ENCODE measurements at regions of chr1 and their contacts with region 1.

Region 1: DNA sequence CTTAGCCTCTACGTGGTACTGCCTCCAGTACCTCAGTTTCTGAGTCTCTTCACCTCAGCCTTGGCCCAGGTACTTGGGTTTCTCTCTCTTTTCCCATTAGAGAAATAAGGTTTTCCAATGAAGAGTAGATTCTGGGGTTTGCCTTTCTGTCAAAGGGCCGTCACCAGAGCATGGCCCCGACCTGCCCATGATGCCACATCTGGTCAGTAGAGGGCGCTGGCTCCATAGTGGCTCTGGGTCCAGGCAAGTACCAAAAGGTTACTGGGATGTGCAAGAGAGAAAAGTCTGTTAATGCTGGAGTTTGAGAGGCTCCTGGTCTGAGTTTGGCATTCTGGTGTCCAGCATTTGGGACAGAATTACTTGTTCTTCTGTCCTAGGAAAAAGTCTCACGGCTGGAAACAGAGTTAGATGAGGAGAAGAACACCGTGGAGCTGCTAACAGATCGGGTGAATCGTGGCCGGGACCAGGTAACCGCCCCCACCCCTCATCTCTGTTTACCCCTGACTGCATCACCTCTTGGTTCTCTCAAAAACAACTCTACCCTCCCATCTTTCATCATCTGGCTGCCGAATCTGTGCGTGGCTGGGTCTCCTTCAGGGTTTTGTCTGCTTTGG is 5.3 kb upstream of the TUFT1 start:
- DNase-seq: peak; percentile 62
- H3K4me3 ChIP-seq: no peak overlapping the region
- H3K27ac ChIP-seq: no peak overlapping the region
- H3K4me1 ChIP-seq: peaks cover 3% of the 10 kb centered on the region
- H3K27me3 ChIP-seq: no peaks in the 10 kb centered on the region
- CTCF ChIP-seq: peak; percentile 92 to 95
- POLR2A ChIP-seq: no peak

Region 2: GRCh38 chr1:151036363-151036762 is 498.4 kb before region 1 on chr1 and contains the start of gene BNIPL:
- CTCF ChIA-PET with region 1: no interaction called
- POLR2A ChIA-PET with region 1: no interaction called
- dilution Hi-C with region 1: no loop called
- intact Hi-C with region 1: no loop called
- DNase-seq: no peak
- H3K4me3 ChIP-seq: no peak within 1 kb of the TSS
- H3K27ac ChIP-seq: no peak within 1 kb of the TSS
- H3K4me1 ChIP-seq: no peaks in the 10 kb centered on the region
- H3K27me3 ChIP-seq: no peaks in the 10 kb centered on the region
- CTCF ChIP-seq: no peak
- POLR2A ChIP-seq: no peak
- total RNA-seq, gene BNIPL: 0.42 and 0.67 TPM in 2 replicates

Region 3: DNA sequence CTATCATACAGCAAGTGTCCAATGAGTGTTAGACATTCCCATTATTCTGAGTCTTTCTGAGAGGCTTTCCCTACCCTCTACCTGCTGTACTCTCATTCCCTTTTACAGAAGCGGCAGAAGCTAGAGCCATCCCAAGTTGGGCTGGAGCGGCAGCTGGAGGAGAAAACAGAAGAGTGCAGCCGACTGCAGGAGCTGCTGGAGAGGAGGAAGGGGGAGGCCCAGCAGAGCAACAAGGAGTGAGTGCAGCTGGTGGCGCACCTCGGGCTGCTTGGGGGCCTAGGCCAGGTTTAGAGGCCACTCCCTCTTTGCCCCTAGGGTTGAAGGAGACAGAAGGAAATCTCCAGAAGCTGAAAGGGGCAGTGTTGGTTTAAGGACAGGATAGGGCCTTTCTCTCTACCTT is 11.4 kb before region 1 on chr1:
- CTCF ChIA-PET with region 1: interaction called, 10 read pairs
- POLR2A ChIA-PET with region 1: no interaction called
- dilution Hi-C with region 1: no loop called
- intact Hi-C with region 1: no loop called
- DNase-seq: no peak
- H3K4me3 ChIP-seq: no peak overlapping the region
- H3K27ac ChIP-seq: no peak overlapping the region
- H3K4me1 ChIP-seq: no peaks in the 10 kb centered on the region
- H3K27me3 ChIP-seq: no peaks in the 10 kb centered on the region
- CTCF ChIP-seq: no peak
- POLR2A ChIP-seq: no peak

Region 4: GRCh38 chr1:151728151-151729054 is 193.6 kb after region 1 on chr1:
- CTCF ChIA-PET with region 1: interaction called, 20 read pairs
- POLR2A ChIA-PET with region 1: no interaction called
- dilution Hi-C with region 1: no loop called
- intact Hi-C with region 1: no loop called
- DNase-seq: no peak
- H3K4me3 ChIP-seq: no peak overlapping the region
- H3K27ac ChIP-seq: no peak overlapping the region
- H3K4me1 ChIP-seq: no peaks in the 10 kb centered on the region
- H3K27me3 ChIP-seq: peaks cover 26 to 28% of the 10 kb centered on the region in 2 experiments
- CTCF ChIP-seq: no peak
- POLR2A ChIP-seq: no peak

Region 5: GRCh38 chr1:151739590-151740375 is 205.0 kb after region 1 on chr1:
- CTCF ChIA-PET with region 1: interaction called, 20 read pairs
- POLR2A ChIA-PET with region 1: no interaction called
- dilution Hi-C with region 1: no loop called
- intact Hi-C with region 1: loop called (anchors 1 kb)
- DNase-seq: no peak
- H3K4me3 ChIP-seq: no peak overlapping the region
- H3K27ac ChIP-seq: no peak overlapping the region
- H3K4me1 ChIP-seq: no peaks in the 10 kb centered on the region
- H3K27me3 ChIP-seq: peaks cover 18 to 29% of the 10 kb centered on the region in 2 experiments
- CTCF ChIP-seq: no peak
- POLR2A ChIP-seq: no peak

Region 6: GRCh38 chr1:151756291-151756690 is 221.5 kb after region 1 on chr1:
- CTCF ChIA-PET with region 1: no interaction called
- POLR2A ChIA-PET with region 1: no interaction called
- dilution Hi-C with region 1: no loop called
- intact Hi-C with region 1: no loop called
- DNase-seq: peak; percentile 42
- H3K4me3 ChIP-seq: no peak overlapping the region
- H3K27ac ChIP-seq: peak overlapping the region; percentile 19
- H3K4me1 ChIP-seq: peaks cover 10% of the 10 kb centered on the region
- H3K27me3 ChIP-seq: no peaks in the 10 kb centered on the region
- CTCF ChIP-seq: no peak
- POLR2A ChIP-seq: no peak

Measured in endothelial cell of umbilical vein (primary cell).